CD8-positive, alpha-beta memory T cell (primary cell): ENCODE measurements at regions of chr5 and their contacts with region 1.

Region 1: GRCh38 chr5:138077065-138077696 is 6.7 kb upstream of the WNT8A start:
- DNase-seq: peak in 4 of 5 donors; percentile 24 to 64 (median 34)
- H3K4me3 ChIP-seq: no peak overlapping the region
- H3K4me3 Mint-ChIP-seq: peak overlapping the region in 1 of 7 donors; percentile 48
- H3K27ac ChIP-seq: no peak overlapping the region
- H3K27ac Mint-ChIP-seq: no peak overlapping the region
- H3K4me1 ChIP-seq: no peaks in the 10 kb centered on the region
- H3K4me1 Mint-ChIP-seq: peaks cover 0 to 13% (median 3%) of the 10 kb centered on the region in 3 donors
- H3K27me3 ChIP-seq: no peaks in the 10 kb centered on the region
- H3K27me3 Mint-ChIP-seq: no peaks in the 10 kb centered on the region

Region 2: GRCh38 chr5:138093036-138093435 is 15.9 kb after region 1 on chr5:
- CTCF ChIA-PET with region 1: interaction called, 14 read pairs
- POLR2A ChIA-PET with region 1: no interaction called
- DNase-seq: peak in 1 of 5 donors; percentile 42
- H3K4me3 ChIP-seq: no peak overlapping the region
- H3K4me3 Mint-ChIP-seq: no peak overlapping the region
- H3K27ac ChIP-seq: no peak overlapping the region
- H3K27ac Mint-ChIP-seq: no peak overlapping the region
- H3K4me1 ChIP-seq: peaks cover 31% of the 10 kb centered on the region
- H3K4me1 Mint-ChIP-seq: peaks cover 0 to 2% (median 0%) of the 10 kb centered on the region in 3 donors
- H3K27me3 ChIP-seq: no peaks in the 10 kb centered on the region
- H3K27me3 Mint-ChIP-seq: peaks cover 20 to 30% of the 10 kb centered on the region in 2 donors

Region 3: DNA sequence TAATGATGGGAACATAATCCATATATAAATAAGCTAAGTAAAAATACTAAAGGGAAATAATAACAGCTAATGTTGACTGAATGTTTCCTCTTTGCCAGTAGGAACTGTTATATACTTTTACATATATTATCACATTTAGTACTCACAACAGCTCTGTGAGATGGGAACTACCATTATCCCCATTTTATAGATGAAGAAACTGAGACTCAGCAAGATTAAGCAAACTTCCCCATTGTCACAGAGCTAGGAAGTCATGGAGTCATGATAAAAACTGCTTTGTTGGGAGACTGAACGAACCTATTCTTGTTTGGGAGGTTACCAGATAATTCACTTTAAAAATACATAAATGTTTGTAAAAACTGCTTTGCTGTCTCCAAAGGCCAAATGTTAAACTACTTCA is 30.0 kb after region 1 on chr5:
- CTCF ChIA-PET with region 1: no interaction called
- POLR2A ChIA-PET with region 1: no interaction called
- DNase-seq: no peak
- H3K4me3 ChIP-seq: no peak overlapping the region
- H3K4me3 Mint-ChIP-seq: no peak overlapping the region
- H3K27ac ChIP-seq: no peak overlapping the region
- H3K27ac Mint-ChIP-seq: no peak overlapping the region
- H3K4me1 ChIP-seq: no peaks in the 10 kb centered on the region
- H3K4me1 Mint-ChIP-seq: no peaks in the 10 kb centered on the region
- H3K27me3 ChIP-seq: no peaks in the 10 kb centered on the region
- H3K27me3 Mint-ChIP-seq: peaks cover 11 to 17% of the 10 kb centered on the region in 2 donors